Activated naive CD4-positive, alpha-beta T cell treated with anti-CD3 and anti-CD28 coated beads for 36 hours (primary cell): ENCODE measurements at regions of chr7 and their contacts with region 1.

Region 1: GRCh38 chr7:127651556-127652332 is at the start of gene SND1:
- DNase-seq: peak; percentile 99
- H3K4me3 Mint-ChIP-seq: peak within 1 kb of the TSS; percentile 99
- H3K27ac Mint-ChIP-seq: peak within 1 kb of the TSS; percentile 91
- H3K4me1 Mint-ChIP-seq: peaks cover 33% of the 10 kb centered on the region
- H3K27me3 Mint-ChIP-seq: no peaks in the 10 kb centered on the region
- total RNA-seq, gene SND1: 184 to 211 TPM

Region 2: GRCh38 chr7:127392566-127393367 is 259.0 kb before region 1 on chr7 and contains the start of gene ZNF800:
- CTCF ChIA-PET with region 1: no interaction called
- intact Hi-C with region 1: loop called (anchors 1 kb)
- DNase-seq: peak; percentile 89
- H3K4me3 Mint-ChIP-seq: peak within 1 kb of the TSS; percentile 95
- H3K27ac Mint-ChIP-seq: peak within 1 kb of the TSS; percentile 93
- H3K4me1 Mint-ChIP-seq: peaks cover 61% of the 10 kb centered on the region
- H3K27me3 Mint-ChIP-seq: no peaks in the 10 kb centered on the region
- total RNA-seq, gene ZNF800: 18.2 to 19.5 TPM

Region 3: GRCh38 chr7:127667017-127667670 is 15.4 kb after region 1 on chr7:
- CTCF ChIA-PET with region 1: no interaction called
- intact Hi-C with region 1: loop called (anchors 1 kb)
- DNase-seq: no peak
- H3K4me3 Mint-ChIP-seq: no peak overlapping the region
- H3K27ac Mint-ChIP-seq: peak overlapping the region; percentile 72
- H3K4me1 Mint-ChIP-seq: peaks cover 51% of the 10 kb centered on the region
- H3K27me3 Mint-ChIP-seq: no peaks in the 10 kb centered on the region

Region 4: GRCh38 chr7:127858091-127858914 is 206.6 kb after region 1 on chr7:
- CTCF ChIA-PET with region 1: no interaction called
- intact Hi-C with region 1: loop called (anchors 1 kb)
- DNase-seq: no peak
- H3K4me3 Mint-ChIP-seq: no peak overlapping the region
- H3K27ac Mint-ChIP-seq: no peak overlapping the region
- H3K4me1 Mint-ChIP-seq: peaks cover 54% of the 10 kb centered on the region
- H3K27me3 Mint-ChIP-seq: no peaks in the 10 kb centered on the region

Region 5: GRCh38 chr7:127870231-127870907 is 218.6 kb after region 1 on chr7:
- CTCF ChIA-PET with region 1: no interaction called
- intact Hi-C with region 1: no loop called
- DNase-seq: no peak
- H3K4me3 Mint-ChIP-seq: no peak overlapping the region
- H3K27ac Mint-ChIP-seq: no peak overlapping the region
- H3K4me1 Mint-ChIP-seq: peaks cover 16% of the 10 kb centered on the region
- H3K27me3 Mint-ChIP-seq: no peaks in the 10 kb centered on the region

Region 6: GRCh38 chr7:128031901-128032604 is 380.3 kb after region 1 on chr7:
- CTCF ChIA-PET with region 1: no interaction called
- intact Hi-C with region 1: loop called (anchors 1 kb)
- DNase-seq: peak; percentile 81
- H3K4me3 Mint-ChIP-seq: peak overlapping the region; percentile 74
- H3K27ac Mint-ChIP-seq: no peak overlapping the region
- H3K4me1 Mint-ChIP-seq: peaks cover 13% of the 10 kb centered on the region
- H3K27me3 Mint-ChIP-seq: peaks cover 6% of the 10 kb centered on the region

Region 7: GRCh38 chr7:128135515-128136214 is 483.9 kb after region 1 on chr7:
- CTCF ChIA-PET with region 1: no interaction called
- intact Hi-C with region 1: loop called (anchors 2 kb)
- DNase-seq: peak; percentile 78
- H3K4me3 Mint-ChIP-seq: peak overlapping the region; percentile 61
- H3K27ac Mint-ChIP-seq: no peak overlapping the region
- H3K4me1 Mint-ChIP-seq: peaks cover 12% of the 10 kb centered on the region
- H3K27me3 Mint-ChIP-seq: peaks cover 18% of the 10 kb centered on the region